AG04449 (cell line): ENCODE measurements at regions of chr6 and their contacts with region 1.

Region 1: DNA sequence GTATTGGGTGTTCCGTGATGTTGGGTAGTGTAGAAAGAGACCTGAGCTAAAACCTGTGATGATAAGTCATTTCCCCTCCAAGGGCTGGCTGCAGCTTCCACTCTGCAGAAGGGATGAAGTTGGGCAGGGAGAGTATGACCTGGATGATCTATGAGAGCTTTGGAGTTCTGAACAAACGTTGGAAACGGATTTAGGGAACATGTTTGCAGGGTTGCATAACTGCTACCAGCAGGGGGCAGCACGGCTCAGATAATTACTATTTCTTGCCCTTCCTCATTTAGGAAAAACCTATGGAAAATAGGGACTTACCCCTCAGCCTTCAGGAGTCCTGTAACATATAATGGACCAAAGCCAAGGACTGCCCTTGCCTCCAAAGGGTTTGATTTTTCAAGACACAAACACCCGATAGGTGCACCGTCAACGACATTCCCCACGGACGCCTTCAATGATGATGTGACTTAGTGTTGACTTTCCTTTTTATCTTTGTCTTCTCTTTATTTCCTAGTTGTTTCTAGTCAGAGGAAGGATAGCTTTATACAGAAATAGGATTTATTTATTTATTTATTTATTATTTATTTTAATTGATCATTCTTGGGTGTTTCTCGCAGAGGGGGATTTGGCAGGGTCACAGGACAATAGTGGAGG is 164.9 kb upstream of the SASH1 start:
- DNase-seq: peak; percentile 5
- H3K4me3 ChIP-seq: no peak overlapping the region
- CTCF ChIP-seq: peak; percentile 61

Region 2: DNA sequence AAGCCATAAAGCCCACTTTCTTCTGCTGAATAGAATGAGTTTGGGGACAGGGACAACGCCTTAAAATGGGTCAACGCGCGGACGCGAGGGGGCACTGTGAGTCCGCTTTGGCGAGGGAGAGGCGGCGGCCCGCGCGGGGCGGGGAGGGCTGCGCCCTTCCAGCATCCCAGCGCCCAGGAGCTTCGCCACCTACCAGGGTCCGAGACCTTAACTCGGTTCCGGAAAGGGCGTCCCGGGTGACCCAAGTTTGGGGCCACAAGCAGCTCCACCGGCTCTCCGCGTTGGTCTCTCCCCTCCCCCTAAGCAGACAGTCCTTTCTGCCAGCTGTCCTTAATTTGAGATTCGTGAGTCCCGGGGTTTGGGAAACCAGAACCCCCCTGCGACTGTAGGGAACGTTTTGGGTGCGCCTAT is 671.0 kb before region 1 on chr6:
- CTCF ChIA-PET with region 1: interaction called, 17 read pairs
- POLR2A ChIA-PET with region 1: interaction called, 3 read pairs
- DNase-seq: no peak
- H3K4me3 ChIP-seq: peak overlapping the region; percentile 72
- CTCF ChIP-seq: peak; percentile 87

Region 3: GRCh38 chr6:148192310-148192709 is 14.6 kb after region 1 on chr6:
- CTCF ChIA-PET with region 1: interaction called, 54 read pairs
- POLR2A ChIA-PET with region 1: no interaction called
- DNase-seq: peak; percentile 85
- H3K4me3 ChIP-seq: no peak overlapping the region
- CTCF ChIP-seq: no peak

Region 4: GRCh38 chr6:148240461-148240840 is 62.7 kb after region 1 on chr6:
- CTCF ChIA-PET with region 1: interaction called, 188 read pairs
- POLR2A ChIA-PET with region 1: no interaction called
- DNase-seq: no peak
- H3K4me3 ChIP-seq: no peak overlapping the region
- CTCF ChIP-seq: no peak

Region 5: DNA sequence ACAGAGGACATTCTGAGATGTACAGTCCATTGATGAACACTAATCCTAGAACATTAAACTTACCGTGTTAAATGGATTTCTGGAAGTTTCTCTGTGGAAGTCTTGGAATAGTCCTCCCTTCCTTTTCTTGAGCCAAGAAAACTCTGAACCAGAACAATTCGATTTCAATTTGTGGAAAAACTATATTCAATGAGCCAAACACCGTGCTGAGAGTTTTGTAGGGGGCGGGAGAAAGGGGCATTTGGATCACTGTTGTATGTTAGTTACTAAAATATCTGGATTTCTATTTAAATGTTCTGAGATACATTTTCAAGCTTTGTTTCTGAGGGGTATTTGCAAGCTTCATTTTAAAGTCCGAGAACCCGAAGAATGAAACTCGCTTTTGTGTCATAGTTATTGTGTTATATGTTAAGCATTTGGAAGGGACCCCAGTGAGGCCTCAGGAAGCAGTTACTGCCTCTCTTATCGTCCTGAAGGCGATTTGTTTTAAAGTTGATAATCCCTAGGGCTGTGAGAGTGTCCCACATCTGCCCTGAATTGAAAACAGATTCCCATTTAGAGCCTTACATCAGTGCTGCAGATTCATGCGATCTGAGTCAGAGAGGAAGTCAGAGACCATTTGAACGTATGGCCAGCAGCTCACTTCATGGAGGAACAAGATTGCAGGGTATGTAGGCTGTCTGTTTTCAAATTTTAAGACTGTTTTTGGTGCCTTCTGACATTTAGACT is 94.2 kb after region 1 on chr6:
- CTCF ChIA-PET with region 1: interaction called, 14 read pairs
- POLR2A ChIA-PET with region 1: no interaction called
- DNase-seq: peak; percentile 94
- H3K4me3 ChIP-seq: peak overlapping the region; percentile 53
- CTCF ChIP-seq: no peak

Region 6: GRCh38 chr6:148471624-148472159 is 294.0 kb after region 1 on chr6:
- CTCF ChIA-PET with region 1: interaction called, 35 read pairs
- POLR2A ChIA-PET with region 1: no interaction called
- DNase-seq: no peak
- H3K4me3 ChIP-seq: no peak overlapping the region
- CTCF ChIP-seq: no peak